ENCODE measurements at regions of chr11 and their contacts with region 1.

Region 1: DNA sequence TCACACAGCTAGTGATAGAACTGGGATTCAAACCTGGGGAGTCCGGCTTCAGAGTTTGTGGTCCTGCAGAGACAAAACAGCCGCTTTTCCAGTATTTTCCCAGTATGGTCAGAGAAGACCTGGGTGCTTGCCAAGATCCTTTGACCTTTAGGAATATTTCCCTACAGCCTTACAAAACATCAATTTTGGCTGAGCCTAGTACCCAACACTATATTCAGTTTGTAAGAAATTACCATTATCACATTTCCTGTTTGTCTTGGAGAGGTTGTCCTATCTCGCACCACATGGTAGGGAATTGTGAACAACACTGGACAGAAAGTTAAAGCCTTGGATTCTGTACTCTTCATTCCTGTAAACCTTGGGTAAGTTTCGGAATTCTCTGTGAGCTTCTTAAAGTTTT is 10.7 kb upstream of the NEU3 start:
- DNase-seq: no peak
- H3K4me3 ChIP-seq: no peak overlapping the region
- H3K27ac ChIP-seq: no peak overlapping the region
- H3K4me1 ChIP-seq: no peaks in the 10 kb centered on the region
- H3K27me3 ChIP-seq: no peaks in the 10 kb centered on the region
- CTCF ChIP-seq: no peak

Region 2: GRCh38 chr11:74615311-74615710 is 362.7 kb before region 1 on chr11:
- CTCF ChIA-PET with region 1: no interaction called
- POLR2A ChIA-PET with region 1: no interaction called
- intact Hi-C with region 1: no loop called
- DNase-seq: no peak
- H3K4me3 ChIP-seq: no peak overlapping the region
- H3K27ac ChIP-seq: no peak overlapping the region
- H3K4me1 ChIP-seq: peaks cover 7% of the 10 kb centered on the region
- H3K27me3 ChIP-seq: no peaks in the 10 kb centered on the region
- CTCF ChIP-seq: no peak

Region 3: GRCh38 chr11:74909385-74909784 is 68.7 kb before region 1 on chr11:
- CTCF ChIA-PET with region 1: no interaction called
- POLR2A ChIA-PET with region 1: no interaction called
- intact Hi-C with region 1: no loop called
- DNase-seq: no peak
- H3K4me3 ChIP-seq: no peak overlapping the region
- H3K27ac ChIP-seq: no peak overlapping the region
- H3K4me1 ChIP-seq: no peaks in the 10 kb centered on the region
- H3K27me3 ChIP-seq: no peaks in the 10 kb centered on the region
- CTCF ChIP-seq: no peak

Region 4: DNA sequence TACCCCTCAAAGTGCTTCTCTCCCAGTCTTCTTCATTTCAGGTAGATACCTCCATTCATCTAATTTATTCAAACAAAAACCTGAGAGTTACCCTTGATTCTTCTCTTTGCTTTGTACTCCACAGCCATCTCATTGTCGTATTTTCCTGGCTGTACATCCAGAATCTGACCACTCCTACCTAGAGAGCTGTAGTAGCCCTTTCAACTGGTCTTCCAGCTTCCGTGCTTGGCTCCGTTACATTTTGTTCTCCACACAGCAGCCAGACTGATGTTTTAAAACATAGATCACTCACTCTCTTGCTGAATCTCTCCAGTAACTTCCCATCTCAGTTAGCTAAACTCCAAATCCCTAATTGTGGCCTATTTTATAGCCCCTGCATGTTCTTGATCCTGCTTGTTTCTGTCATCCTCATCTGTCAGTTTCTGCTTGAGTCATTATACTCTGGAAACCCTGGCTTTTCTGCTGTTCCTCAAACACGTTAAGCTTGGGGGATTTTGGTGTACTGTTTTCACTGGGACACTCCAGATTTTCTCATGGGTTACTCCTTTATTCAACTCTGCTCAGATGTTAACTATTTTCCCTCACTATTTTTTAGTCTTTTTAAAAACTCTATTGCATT is 21.5 kb before region 1 on chr11:
- CTCF ChIA-PET with region 1: no interaction called
- POLR2A ChIA-PET with region 1: interaction called, 10 read pairs
- intact Hi-C with region 1: no loop called
- DNase-seq: no peak
- H3K4me3 ChIP-seq: no peak overlapping the region
- H3K27ac ChIP-seq: no peak overlapping the region
- H3K4me1 ChIP-seq: peaks cover 20% of the 10 kb centered on the region
- H3K27me3 ChIP-seq: no peaks in the 10 kb centered on the region
- CTCF ChIP-seq: no peak

Region 5: DNA sequence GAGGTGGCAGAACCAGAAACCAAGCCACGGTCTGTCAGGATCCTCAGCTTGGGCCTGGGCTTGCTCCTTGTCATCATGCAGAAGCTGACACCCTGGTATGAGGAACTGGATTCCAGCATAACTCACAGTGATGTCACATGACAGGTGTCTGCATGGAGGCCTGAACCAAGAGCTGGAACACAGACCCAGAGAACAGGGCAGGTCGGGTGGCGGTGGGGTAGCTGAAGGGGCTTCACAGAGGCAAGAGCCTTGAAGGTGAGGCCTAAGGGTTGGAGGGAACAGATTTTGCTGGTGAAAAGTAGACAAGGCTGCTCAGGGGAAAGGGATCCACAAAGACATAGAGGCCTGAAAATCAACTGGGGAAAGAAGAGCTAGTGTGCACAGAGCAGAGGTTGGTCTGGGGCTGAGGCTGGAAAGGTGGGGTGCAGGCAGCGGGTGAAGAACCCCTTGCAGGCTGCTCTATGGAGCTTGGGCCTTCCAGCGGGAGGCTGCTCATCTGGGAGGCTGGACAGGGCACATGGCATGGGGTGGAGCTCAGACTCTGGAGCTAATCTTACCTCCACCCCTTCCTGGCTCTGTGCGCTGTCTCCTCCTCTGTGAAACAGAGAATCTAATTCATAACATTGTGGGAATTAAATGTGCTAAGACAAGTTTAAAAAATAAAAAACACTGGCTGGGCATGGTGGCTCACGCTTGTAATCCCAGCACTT is 402.8 kb after region 1 on chr11:
- CTCF ChIA-PET with region 1: no interaction called
- POLR2A ChIA-PET with region 1: no interaction called
- intact Hi-C with region 1: no loop called
- DNase-seq: no peak
- H3K4me3 ChIP-seq: no peak overlapping the region
- H3K27ac ChIP-seq: no peak overlapping the region
- H3K4me1 ChIP-seq: no peaks in the 10 kb centered on the region
- H3K27me3 ChIP-seq: no peaks in the 10 kb centered on the region
- CTCF ChIP-seq: no peak

Region 6: GRCh38 chr11:76491656-76492055 is 1513.6 kb after region 1 on chr11:
- CTCF ChIA-PET with region 1: no interaction called
- POLR2A ChIA-PET with region 1: no interaction called
- intact Hi-C with region 1: no loop called
- DNase-seq: no peak
- H3K4me3 ChIP-seq: no peak overlapping the region
- H3K27ac ChIP-seq: no peak overlapping the region
- H3K4me1 ChIP-seq: no peaks in the 10 kb centered on the region
- H3K27me3 ChIP-seq: no peaks in the 10 kb centered on the region
- CTCF ChIP-seq: no peak

Measured in A673 (cell line).